WTC11 (cell line): ENCODE measurements at regions of chr6 and their contacts with region 1.

Region 1: DNA sequence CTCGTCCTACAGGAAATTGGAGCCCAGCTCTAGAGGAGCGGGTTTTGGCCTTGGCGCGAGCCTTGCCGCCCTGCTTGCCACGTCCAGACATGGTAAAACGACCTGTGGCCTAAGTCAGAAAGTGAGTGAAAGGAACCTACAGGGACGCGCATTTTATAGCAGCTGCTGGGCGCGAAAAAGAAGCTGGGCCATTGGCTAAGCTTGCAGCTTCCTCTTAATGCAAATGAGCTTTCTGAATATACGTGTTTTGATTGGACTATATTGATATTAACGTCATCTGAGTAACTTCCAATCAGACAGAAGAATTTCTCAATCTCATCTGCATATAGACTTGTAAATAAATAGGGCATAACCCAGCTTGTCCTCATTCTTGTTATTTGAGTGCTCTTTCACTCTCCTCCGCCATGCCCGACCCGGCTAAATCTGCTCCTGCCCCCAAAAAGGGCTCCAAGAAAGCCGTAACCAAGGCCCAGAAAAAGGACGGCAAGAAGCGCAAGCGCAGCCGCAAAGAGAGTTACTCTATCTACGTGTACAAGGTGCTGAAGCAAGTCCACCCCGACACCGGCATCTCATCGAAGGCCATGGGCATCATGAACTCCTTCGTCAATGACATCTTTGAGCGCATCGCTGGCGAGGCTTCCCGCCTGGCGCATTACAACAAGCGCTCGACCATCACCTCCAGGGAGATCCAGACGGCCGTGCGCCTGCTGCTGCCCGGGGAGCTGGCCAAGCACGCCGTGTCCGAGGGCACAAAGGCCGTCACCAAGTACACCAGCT is 18.9 kb downstream of the OR2B2 start:
- DNase-seq: peak; percentile 91
- ATAC-seq: peak; percentile 46
- H3K4me3 Mint-ChIP-seq: no peak overlapping the region
- H3K27ac Mint-ChIP-seq: peak overlapping the region; percentile 99
- H3K4me1 Mint-ChIP-seq: peaks cover 42% of the 10 kb centered on the region
- H3K27me3 Mint-ChIP-seq: no peaks in the 10 kb centered on the region; the same call in 1 of the 2 replicates
- CTCF ChIP-seq: no peak

Region 2: GRCh38 chr6:26156076-26156849 is 1737.0 kb before region 1 on chr6:
- CTCF ChIA-PET with region 1: no interaction called
- POLR2A ChIA-PET with region 1: interaction called, 14 read pairs
- DNase-seq: peak; percentile 81
- ATAC-seq: peak; percentile 47
- H3K4me3 Mint-ChIP-seq: peak overlapping the region; percentile 84
- H3K27ac Mint-ChIP-seq: peak overlapping the region; percentile 98
- H3K4me1 Mint-ChIP-seq: peaks cover 22% of the 10 kb centered on the region
- H3K27me3 Mint-ChIP-seq: peaks cover 3% of the 10 kb centered on the region; the same call in 1 of the 2 replicates
- CTCF ChIP-seq: no peak

Region 3: DNA sequence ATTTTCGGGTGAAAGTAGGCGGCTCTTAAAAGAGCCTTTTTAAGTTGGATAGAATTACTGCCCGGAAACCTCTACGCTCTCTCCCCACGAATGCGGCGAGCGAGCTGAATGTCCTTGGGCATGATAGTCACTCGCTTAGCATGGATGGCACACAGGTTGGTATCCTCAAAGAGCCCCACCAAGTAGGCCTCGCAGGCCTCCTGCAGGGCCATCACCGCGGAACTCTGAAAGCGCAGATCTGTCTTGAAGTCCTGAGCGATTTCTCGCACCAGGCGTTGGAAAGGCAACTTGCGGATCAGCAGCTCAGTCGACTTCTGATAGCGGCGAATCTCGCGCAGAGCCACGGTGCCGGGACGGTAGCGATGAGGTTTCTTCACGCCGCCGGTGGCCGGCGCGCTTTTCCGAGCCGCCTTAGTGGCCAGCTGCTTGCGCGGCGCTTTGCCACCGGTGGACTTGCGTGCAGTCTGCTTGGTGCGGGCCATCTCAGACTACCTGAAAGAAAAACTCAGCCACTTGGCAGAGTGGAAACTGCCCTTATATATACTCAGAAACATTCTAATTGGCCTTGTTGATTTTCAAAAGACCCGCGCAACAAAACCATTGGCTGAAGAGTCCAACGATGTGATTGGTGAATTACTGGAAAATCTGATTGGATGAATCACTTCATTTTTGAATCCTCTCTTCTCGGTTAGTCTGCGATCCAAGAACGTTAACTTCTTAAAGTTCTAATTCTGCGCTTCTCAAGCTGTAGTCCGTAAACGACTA is 1622.2 kb before region 1 on chr6:
- CTCF ChIA-PET with region 1: no interaction called
- POLR2A ChIA-PET with region 1: interaction called, 19 read pairs
- DNase-seq: peak; percentile 65
- ATAC-seq: peak; percentile 28
- H3K4me3 Mint-ChIP-seq: no peak overlapping the region
- H3K27ac Mint-ChIP-seq: no peak overlapping the region
- H3K4me1 Mint-ChIP-seq: peaks cover 35% of the 10 kb centered on the region
- H3K27me3 Mint-ChIP-seq: no peaks in the 10 kb centered on the region
- CTCF ChIP-seq: no peak

Region 4: GRCh38 chr6:27809939-27810767 is 83.1 kb before region 1 on chr6:
- CTCF ChIA-PET with region 1: interaction called, 6 read pairs
- POLR2A ChIA-PET with region 1: interaction called, 326 read pairs
- DNase-seq: peak; percentile 58
- ATAC-seq: peak; percentile 7
- H3K4me3 Mint-ChIP-seq: peak overlapping the region; percentile 98
- H3K27ac Mint-ChIP-seq: peak overlapping the region; percentile 98
- H3K4me1 Mint-ChIP-seq: peaks cover 45% of the 10 kb centered on the region
- H3K27me3 Mint-ChIP-seq: peaks cover 3% of the 10 kb centered on the region
- CTCF ChIP-seq: no peak

Region 5: DNA sequence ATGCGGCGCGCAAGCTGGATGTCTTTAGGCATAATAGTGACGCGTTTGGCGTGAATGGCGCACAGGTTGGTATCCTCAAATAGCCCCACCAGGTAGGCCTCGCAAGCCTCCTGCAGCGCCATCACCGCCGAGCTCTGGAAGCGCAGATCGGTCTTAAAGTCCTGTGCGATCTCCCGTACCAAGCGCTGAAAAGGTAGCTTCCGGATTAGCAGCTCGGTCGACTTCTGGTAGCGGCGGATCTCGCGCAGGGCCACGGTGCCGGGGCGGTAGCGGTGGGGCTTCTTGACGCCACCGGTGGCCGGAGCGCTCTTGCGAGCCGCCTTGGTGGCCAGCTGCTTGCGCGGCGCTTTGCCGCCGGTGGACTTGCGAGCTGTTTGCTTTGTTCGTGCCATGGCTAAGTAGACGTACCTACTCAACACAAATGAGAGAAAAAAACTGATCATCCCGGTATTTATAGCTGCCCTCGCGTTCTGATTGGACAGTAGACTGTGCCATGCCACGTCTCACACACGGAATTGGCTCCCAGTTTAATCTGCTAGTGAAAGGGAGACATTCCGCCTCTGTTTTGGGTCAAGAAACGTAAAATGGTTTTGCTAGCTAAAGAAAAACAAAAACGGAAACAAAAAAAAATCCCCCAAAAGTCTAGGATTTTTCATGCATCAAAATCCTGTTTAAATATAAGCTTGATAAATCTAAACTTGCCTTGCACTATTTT is 21.2 kb before region 1 on chr6:
- CTCF ChIA-PET with region 1: interaction called, 17 read pairs
- POLR2A ChIA-PET with region 1: interaction called, 817 read pairs
- DNase-seq: peak; percentile 79
- ATAC-seq: peak; percentile 58
- H3K4me3 Mint-ChIP-seq: peak overlapping the region; percentile 94
- H3K27ac Mint-ChIP-seq: peak overlapping the region; percentile 99
- H3K4me1 Mint-ChIP-seq: peaks cover 50% of the 10 kb centered on the region
- H3K27me3 Mint-ChIP-seq: no peaks in the 10 kb centered on the region
- CTCF ChIP-seq: no peak

Region 6: DNA sequence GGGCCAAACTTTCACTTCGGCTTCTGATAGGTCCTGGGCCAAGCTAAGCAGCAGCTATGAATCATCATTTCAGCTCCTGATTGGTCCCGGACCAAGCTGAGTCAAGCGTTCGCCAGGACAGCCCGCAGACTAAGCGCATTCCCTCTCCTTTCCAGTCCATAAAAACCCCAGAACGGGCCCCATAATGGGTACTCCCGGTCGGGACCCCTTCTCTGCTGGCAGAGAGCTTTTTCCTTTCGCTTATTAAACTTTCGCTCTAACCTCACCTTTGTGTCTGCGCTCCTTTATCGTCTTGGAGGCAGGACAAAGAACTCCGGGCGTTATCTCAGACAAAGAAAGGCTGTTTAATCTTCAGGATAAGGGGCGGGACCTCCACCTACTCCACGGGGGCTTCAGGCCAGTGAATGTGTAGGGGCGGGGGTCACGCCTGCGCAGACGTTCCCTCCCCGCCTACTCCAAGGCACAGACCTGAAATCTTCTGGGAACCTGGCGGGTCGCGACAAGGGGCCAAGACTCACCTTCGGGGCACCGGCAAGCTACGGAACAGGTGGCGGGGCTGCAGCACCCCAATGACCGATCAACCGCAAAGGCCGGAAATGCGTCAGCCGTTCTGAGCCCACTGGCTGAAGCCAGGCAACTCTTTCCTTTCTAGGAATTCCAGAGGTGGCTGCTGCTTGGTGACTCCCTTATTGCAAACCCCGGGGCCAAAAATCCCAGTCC is 442.5 kb after region 1 on chr6 and contains the start of gene ZSCAN31:
- CTCF ChIA-PET with region 1: no interaction called
- POLR2A ChIA-PET with region 1: interaction called, 24 read pairs
- DNase-seq: peak; percentile 87
- ATAC-seq: peak; percentile 96
- H3K4me3 Mint-ChIP-seq: no peak within 1 kb of the TSS
- H3K27ac Mint-ChIP-seq: no peak within 1 kb of the TSS
- H3K4me1 Mint-ChIP-seq: peaks cover 9% of the 10 kb centered on the region
- H3K27me3 Mint-ChIP-seq: peaks cover 11% of the 10 kb centered on the region
- CTCF ChIP-seq: no peak
- total RNA-seq, gene ZSCAN31: 6.6 to 9.1 TPM (median 7.4 TPM) in 3 replicates